ENCODE measurements at regions of chr11 and their contacts with region 1.

Region 1: DNA sequence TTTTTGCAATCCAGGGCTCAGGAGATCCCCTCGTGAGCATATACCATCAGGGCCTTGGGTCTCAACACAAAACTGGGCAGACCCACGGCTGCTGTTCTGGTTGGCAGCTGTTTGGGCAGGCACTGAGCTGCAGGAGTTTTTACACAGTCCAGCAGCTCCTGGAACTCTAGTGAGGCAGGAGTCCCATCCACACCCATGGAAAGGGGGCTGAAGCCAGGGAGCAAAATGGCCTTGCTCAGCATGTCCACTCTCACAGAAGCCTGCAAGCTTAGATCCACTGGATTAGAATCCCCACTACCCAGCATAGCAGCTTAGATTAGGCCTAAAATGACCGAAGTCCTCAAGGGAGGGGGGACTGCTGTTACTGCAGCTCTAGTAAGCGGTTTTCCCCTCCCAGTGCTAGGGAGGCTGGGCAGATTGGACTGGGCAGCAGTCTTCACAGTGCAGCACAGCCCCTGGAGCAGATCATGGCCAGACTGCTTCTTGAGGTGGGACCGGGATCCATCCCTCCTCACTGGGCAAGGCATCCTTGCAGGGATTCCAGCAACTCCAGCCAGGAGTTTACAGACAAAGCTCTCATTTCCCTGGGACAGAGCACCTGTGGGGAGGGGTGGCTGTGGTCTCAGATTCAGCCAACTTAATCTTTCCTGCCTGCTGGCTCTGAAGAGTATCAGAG is 36.4 kb upstream of the CARD16 start:
- DNase-seq: no peak
- H3K4me3 Mint-ChIP-seq: no peak overlapping the region
- H3K27ac Mint-ChIP-seq: no peak overlapping the region
- H3K4me1 Mint-ChIP-seq: peaks cover 28% of the 10 kb centered on the region
- H3K27me3 Mint-ChIP-seq: peaks cover 14% of the 10 kb centered on the region

Region 2: DNA sequence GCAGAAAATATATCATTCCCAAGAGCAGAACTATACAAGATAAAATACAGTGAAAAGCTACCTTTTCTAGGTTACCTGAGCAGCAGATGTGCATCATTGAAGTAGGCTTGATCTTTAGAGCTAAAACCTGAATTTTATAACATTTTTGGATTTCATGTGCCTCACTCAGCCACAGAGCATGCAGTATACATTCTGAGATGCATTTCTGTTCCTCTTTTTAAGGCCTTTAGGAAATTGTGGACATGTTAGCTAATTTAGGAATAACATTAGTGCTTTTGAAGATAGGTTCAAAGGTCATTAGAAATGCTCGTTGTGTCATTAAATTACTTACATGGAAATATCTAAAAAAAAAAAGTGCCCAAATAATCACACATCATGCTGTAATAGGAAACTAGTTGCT is 687.0 kb before region 1 on chr11:
- intact Hi-C with region 1: no loop called
- DNase-seq: no peak
- H3K4me3 Mint-ChIP-seq: no peak overlapping the region
- H3K27ac Mint-ChIP-seq: no peak overlapping the region
- H3K4me1 Mint-ChIP-seq: no peaks in the 10 kb centered on the region
- H3K27me3 Mint-ChIP-seq: no peaks in the 10 kb centered on the region

Region 3: GRCh38 chr11:104907521-104908185 is 173.9 kb before region 1 on chr11:
- intact Hi-C with region 1: no loop called
- DNase-seq: no peak
- H3K4me3 Mint-ChIP-seq: no peak overlapping the region
- H3K27ac Mint-ChIP-seq: no peak overlapping the region
- H3K4me1 Mint-ChIP-seq: peaks cover 13% of the 10 kb centered on the region
- H3K27me3 Mint-ChIP-seq: no peaks in the 10 kb centered on the region

Region 4: DNA sequence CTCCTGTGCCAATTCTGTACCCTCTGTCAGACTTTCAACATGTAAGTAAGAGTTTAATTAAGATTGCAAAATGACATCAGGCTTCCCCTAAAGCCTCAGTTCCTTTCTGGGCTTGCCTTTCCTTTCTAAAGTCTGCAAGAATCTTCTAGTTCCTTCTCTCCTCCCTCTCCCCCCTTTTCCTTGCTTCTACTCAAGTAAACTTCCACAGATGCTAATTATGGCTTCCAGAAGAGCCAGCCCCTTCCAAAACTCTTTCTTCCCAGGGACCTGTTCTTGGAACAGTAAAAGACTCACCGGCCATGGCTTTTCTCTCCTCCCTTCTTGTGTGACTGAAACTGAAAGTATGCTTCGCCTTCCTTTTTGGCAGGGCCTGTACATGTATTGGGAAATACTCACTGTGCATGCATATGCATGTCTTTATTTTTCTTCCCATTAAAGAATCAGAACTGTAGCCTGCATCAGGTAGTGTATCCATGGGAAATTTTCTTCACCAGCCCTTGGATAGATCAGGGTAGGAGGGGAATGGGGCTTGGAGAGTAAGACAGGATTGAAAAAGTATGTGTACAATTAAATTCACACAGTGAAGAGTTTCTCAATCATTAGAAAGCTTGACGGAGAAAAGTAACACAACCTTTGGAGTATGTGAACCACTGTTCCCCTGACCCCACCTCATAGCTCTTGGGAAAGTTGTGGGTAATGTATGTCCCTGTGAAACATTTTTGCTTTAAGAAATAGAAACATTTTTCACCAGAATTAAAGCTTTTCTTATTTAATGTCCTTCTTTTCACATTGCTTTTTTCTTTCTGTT is 46.5 kb before region 1 on chr11 and contains the start of gene CASP1:
- intact Hi-C with region 1: loop called (anchors 1 kb)
- DNase-seq: peak; percentile 31
- H3K4me3 Mint-ChIP-seq: peak within 1 kb of the TSS; percentile 93
- H3K27ac Mint-ChIP-seq: peak within 1 kb of the TSS; percentile 94
- H3K4me1 Mint-ChIP-seq: peaks cover 32% of the 10 kb centered on the region
- H3K27me3 Mint-ChIP-seq: no peaks in the 10 kb centered on the region
- total RNA-seq, gene CASP1: 21.1 and 21.4 TPM in 2 replicates

Region 5: DNA sequence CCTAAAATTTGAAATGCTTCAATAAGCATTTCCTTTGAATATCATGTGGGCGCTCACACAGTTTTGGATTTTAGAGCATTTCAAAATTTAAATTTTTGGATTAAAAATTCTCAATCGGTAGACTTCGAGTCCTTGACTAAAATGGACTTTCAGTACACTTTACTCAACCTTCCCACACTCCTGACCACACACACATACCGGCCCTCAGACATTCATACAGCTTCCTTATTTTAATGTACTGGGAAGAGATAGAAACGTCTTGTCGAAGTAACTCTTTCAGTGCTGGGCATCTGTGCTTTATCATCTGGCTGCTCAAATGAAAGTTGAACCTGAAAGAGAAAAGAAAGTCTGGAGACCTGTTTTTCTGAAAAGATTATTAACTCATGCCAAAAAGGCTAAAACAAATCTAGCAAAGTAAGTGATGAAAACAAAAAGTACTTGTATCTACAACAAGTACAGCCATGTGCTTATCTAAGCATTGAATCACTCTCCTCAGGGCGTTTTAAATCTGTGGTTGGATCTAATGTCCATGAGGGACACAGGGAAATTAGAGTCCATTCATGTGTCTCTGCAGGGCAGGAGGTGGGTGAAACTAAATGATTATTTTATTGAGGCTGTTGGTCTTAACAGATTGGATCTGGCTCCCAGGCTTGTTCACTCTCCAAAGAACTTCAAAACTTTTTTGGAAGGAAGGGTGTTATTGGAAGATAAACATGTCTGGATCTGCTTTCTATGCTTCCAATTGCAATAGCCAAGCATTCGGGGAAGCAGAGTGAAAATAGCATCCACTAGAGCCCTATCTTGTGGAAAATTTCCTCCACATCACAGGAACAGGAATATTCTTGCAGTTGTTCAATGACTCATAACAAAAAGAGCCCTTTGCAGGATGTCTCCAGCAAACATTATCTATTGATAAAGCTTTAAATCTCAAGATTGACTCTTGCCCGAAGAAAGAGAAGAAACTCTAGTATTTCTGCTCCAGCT is 11.0 kb after region 1 on chr11:
- intact Hi-C with region 1: no loop called
- DNase-seq: no peak
- H3K4me3 Mint-ChIP-seq: no peak overlapping the region
- H3K27ac Mint-ChIP-seq: no peak overlapping the region
- H3K4me1 Mint-ChIP-seq: peaks cover 4% of the 10 kb centered on the region
- H3K27me3 Mint-ChIP-seq: peaks cover 29% of the 10 kb centered on the region

Region 6: DNA sequence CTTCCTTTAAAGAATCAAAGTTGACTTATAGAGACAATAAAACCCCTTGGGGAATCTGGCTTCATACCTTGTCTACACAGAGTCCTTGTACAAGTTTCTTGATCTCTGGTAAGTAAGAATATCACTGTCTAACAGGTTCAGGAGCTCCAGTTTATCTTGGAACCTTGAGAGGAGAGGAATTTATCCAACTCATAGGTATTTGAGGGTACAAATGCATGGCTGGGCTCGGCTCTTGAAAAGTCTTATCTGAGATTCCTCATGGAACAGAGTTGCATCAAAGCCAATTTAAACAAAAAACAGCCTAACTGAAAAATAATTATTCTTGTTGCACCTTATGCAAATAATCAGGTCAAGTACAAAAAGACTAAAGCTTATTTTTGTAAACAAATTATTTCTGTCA is 24.6 kb after region 1 on chr11:
- intact Hi-C with region 1: loop called (anchors 1 kb)
- DNase-seq: no peak
- H3K4me3 Mint-ChIP-seq: no peak overlapping the region
- H3K27ac Mint-ChIP-seq: no peak overlapping the region
- H3K4me1 Mint-ChIP-seq: peaks cover 25% of the 10 kb centered on the region
- H3K27me3 Mint-ChIP-seq: peaks cover 2% of the 10 kb centered on the region

Measured in activated T-helper 1 cell treated with anti-CD3 and anti-CD28 coated beads, Interleukin-12 subunit alpha, Interleukin-12 subunit beta, Interleukin-2, Interleukin-4 antibody, amounts not matched to agents 30 ng/mL and 10 ng/mL and 1 ng/mL, durations not matched to agents 14 hours and 24 hours and 36 hours (primary cell).